ENCODE measurements at regions of chr1 and their contacts with region 1.

Region 1: DNA sequence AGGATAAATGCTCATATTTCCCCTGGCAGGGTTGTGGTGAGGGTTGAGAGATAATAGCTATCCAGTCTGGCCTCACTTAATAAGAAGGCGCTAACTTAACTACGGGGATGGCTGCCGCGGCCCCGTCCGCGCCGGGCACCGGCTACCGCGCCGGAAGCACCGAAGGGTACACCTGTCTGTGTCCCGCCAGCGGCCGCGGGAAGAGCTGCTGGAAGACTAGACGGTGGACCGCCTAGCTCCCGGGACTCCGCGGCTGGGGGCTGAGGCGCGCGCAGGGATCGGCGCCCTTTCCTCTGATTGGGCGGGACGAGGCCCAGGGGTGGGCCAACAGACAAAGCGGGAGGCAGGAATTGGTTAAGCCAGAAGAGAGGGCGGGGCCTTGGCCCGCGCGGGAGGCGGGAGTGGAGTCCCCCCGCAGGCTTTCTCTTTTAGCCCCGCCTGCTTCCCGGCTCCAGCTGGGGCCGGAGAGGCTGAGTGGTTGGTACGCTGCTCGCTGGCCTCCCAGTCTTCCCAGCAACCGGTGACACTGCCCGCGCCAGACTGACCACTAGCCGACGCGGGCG is at the start of gene ZNF672:
- DNase-seq: peak; percentile 96
- ATAC-seq: peak; percentile 88
- H3K4me3 Mint-ChIP-seq: no peak within 1 kb of the TSS
- H3K27ac Mint-ChIP-seq: no peak within 1 kb of the TSS
- H3K4me1 Mint-ChIP-seq: peaks cover 20% of the 10 kb centered on the region
- H3K27me3 Mint-ChIP-seq: peaks cover 2% of the 10 kb centered on the region
- CTCF ChIP-seq: no peak
- total RNA-seq, gene ZNF672: 43.8 to 45.1 TPM

Region 2: GRCh38 chr1:248852481-248853405 is 14.9 kb after region 1 on chr1:
- CTCF ChIA-PET with region 1: interaction called, 26 read pairs
- POLR2A ChIA-PET with region 1: interaction called, 43 read pairs
- intact Hi-C with region 1: no loop called
- DNase-seq: no peak
- ATAC-seq: no peak
- H3K4me3 Mint-ChIP-seq: no peak overlapping the region
- H3K27ac Mint-ChIP-seq: no peak overlapping the region
- H3K4me1 Mint-ChIP-seq: peaks cover 7% of the 10 kb centered on the region
- H3K27me3 Mint-ChIP-seq: no peaks in the 10 kb centered on the region
- CTCF ChIP-seq: no peak

Region 3: DNA sequence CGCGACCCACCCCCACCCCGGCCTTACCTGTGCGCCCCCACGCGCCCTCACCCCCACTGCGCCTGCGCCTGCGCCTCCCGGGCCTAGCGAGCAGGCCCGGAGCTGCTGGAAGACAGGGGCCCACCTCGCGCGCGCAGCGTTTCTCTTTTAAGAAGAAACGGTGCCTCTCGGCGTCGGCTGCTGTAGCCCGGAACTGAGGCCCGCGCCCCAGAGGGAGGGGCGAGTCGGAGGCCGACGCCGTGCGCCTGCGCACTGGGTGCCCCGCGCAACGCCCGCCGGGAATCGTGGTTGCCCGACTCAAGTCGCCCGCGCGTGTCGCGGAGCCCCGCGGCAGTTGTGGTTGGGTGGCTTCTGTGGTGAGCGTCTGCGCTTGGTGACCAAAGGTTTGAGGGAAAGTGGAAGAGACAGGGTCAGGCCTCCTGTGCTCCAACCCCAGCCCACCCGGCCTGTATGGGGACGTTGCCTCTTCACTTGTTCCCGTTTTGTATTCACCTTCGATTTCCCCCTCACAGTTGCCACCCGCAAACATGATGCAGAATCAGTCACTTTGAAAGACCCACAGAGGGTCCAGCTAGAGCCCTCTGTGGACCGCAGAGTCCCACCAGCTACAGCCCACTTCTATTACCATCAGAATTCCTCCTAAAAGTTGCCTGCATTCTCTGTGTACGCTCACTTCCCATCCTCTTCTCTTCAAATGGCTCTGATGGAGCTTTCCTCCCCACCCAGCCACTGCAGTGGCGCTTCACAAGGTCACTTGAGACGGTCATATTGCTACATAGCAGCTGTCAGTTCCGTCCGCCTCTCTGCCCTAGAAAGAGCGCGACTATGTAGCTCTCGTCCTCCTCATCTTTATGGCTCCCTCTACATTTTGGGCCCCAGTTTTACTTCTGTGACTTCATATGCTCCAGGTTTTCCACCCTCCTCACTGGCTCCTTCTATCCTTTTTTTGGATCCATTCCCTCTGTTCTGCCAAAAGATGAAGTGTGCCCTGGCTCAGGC is 21.3 kb after region 1 on chr1 and contains the start of gene ZNF692:
- CTCF ChIA-PET with region 1: interaction called, 26 read pairs
- POLR2A ChIA-PET with region 1: interaction called, 43 read pairs
- intact Hi-C with region 1: loop called (anchors 1 kb)
- DNase-seq: peak; percentile 99
- ATAC-seq: peak; percentile 86
- H3K4me3 Mint-ChIP-seq: peak within 1 kb of the TSS; percentile 88
- H3K27ac Mint-ChIP-seq: peak within 1 kb of the TSS; percentile 95
- H3K4me1 Mint-ChIP-seq: peaks cover 37% of the 10 kb centered on the region
- H3K27me3 Mint-ChIP-seq: no peaks in the 10 kb centered on the region
- CTCF ChIP-seq: no peak
- total RNA-seq, gene ZNF692: 80.8 to 85.6 TPM